ENCODE measurements at regions of chr2 and their contacts with region 1.

Region 1: GRCh38 chr2:1297372-1298159 is 115.7 kb upstream of the TPO start:
- DNase-seq: no peak
- H3K4me3 ChIP-seq: no peak overlapping the region
- H3K27ac ChIP-seq: no peak overlapping the region
- H3K4me1 ChIP-seq: no peaks in the 10 kb centered on the region
- H3K27me3 ChIP-seq: no peaks in the 10 kb centered on the region
- CTCF ChIP-seq: no peak

Region 2: DNA sequence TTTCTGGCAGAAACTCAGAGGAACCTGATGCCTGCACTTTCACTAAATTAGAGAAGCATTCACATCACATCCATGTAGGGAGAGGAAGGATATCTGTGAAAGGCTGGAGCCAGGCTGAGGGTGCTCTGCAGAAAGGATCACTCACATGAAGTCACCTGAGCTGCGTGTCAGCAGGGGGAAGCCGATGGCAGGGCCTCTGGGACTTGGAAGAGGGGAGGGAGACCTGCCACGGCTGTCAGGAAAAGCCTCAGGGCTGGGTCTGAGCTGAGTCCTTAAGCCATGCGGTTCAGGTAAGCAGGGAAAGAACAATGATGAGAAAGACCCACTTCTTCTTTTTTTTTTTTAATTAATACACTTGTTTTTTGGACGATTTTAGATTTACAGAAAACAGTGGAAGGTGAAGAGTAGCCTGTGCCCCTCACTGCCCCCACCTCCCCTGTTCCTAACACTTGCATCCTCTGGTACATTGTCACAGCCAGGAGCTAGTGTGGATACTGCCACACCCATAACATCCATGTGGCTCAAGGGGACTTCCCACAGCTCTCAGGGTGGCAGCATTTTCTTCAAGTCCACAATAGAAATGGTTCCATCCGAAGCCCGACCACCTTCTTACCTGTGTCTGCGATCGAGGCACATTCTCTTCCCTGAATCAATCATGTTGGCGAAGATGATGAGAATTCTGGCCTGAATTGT is 40.8 kb before region 1 on chr2:
- CTCF ChIA-PET with region 1: no interaction called
- dilution Hi-C with region 1: loop called (anchors 5 kb)
- in situ Hi-C with region 1: no loop called
- intact Hi-C with region 1: no loop called
- DNase-seq: no peak
- H3K4me3 ChIP-seq: no peak overlapping the region
- H3K27ac ChIP-seq: no peak overlapping the region
- H3K4me1 ChIP-seq: no peaks in the 10 kb centered on the region
- H3K27me3 ChIP-seq: no peaks in the 10 kb centered on the region
- CTCF ChIP-seq: no peak

Region 3: GRCh38 chr2:1348789-1349188 is 51.2 kb after region 1 on chr2:
- CTCF ChIA-PET with region 1: no interaction called
- dilution Hi-C with region 1: loop called (anchors 5 kb)
- in situ Hi-C with region 1: no loop called
- intact Hi-C with region 1: no loop called
- DNase-seq: no peak
- H3K4me3 ChIP-seq: no peak overlapping the region
- H3K27ac ChIP-seq: no peak overlapping the region
- H3K4me1 ChIP-seq: no peaks in the 10 kb centered on the region
- H3K27me3 ChIP-seq: no peaks in the 10 kb centered on the region
- CTCF ChIP-seq: no peak

Measured in mammary epithelial cell (primary cell).